ENCODE measurements at regions of chr11 and their contacts with region 1.

Region 1: DNA sequence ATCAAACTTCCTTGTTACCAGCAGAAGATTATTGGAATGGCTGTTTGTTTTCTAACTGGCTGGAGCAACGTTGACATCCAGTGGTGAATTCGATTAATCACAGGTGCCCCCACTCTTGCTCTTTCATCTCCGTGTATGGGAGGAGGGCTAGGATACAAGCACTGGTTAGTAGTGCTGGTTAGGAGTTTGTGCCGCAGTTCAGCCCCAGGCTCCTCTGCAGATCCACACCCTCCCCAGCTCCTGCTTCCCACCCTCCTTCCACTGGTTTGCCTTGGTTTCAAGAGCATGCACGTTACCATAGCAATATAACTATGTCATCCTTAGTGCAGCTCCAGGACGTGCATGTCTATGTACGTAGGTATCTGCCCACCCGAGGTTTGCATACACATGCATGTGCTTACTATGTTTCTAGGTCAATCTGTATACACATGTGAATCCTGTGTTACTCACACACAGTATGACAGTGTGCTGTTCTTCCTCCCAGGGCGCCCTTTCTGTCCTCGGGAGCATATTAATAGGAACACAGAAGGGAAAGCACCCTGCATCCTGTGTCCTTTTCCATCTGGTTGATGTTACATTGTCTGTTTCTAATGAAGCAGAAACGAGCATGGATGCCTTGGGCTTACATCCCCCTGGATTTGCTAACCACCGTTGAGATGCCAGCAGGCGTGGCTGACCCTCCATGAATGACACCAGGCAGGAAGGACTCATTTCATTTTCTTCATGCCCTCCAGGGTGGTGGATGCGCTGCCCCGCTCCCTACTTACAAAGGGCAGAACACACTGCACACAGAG is 539.3 kb downstream of the OPCML start:
- DNase-seq: no peak
- H3K4me3 ChIP-seq: no peak overlapping the region
- H3K27me3 ChIP-seq: peaks cover 19% of the 10 kb centered on the region
- CTCF ChIP-seq: 0 out of 2 replicates have a peak, but pooled peaks have one; percentile 20

Region 2: DNA sequence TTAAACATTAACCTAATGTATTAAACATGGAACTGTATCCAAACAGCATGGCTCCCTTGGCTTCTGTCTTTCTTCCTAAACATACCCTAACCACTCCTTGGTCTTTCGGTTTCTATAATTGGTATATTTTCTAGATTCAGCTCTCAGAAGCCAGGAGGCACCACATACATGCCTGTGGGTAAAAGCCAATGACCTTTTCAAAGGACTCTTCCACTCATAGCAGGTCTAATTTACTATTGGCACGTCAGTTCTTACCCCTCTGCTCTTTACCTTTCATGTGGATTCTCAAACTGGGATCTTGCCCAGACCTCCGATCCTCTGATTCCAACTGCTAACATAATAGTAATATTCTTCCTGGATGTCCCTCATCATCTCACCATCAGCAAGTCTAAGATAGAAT is 787.5 kb before region 1 on chr11:
- CTCF ChIA-PET with region 1: no interaction called
- POLR2A ChIA-PET with region 1: interaction called, 16 read pairs
- DNase-seq: no peak
- H3K4me3 ChIP-seq: no peak overlapping the region
- H3K27me3 ChIP-seq: no peaks in the 10 kb centered on the region
- CTCF ChIP-seq: no peak